HEK293T (cell line): ENCODE measurements at regions of chr10 and their contacts with region 1.

Region 1: GRCh38 chr10:35218339-35218955 is 91.8 kb downstream of the CREM start:
- DNase-seq: peak; percentile 62

Region 2: DNA sequence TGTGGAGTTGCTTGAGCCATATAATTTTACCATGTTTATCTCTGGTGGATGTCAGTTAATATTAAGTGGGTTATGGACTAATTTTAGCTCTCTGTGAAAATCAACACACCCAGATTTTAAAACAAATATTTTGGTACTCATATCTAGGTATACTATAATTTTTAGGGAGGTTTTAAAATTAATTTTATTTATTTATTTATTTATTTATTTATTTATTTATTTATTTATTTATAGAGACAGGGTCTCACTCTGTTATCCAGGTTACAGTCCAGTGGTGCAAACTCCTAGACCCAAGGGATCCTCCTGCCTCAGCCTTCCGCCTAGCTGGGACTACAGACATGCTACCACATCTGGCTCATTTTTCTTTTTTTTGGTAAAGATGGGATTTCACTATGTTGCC is 99.1 kb before region 1 on chr10:
- CTCF ChIA-PET with region 1: interaction called, 22 read pairs
- POLR2A ChIA-PET with region 1: no interaction called
- DNase-seq: no peak

Region 3: GRCh38 chr10:35204650-35205319 is 13.7 kb before region 1 on chr10:
- CTCF ChIA-PET with region 1: interaction called, 10 read pairs
- POLR2A ChIA-PET with region 1: no interaction called
- DNase-seq: no peak